Thyroid gland (tissue), 4 donors: ENCODE measurements at regions of chr3 and their contacts with region 1.

Region 1: GRCh38 chr3:160999276-160999675 is 105.9 kb downstream of the B3GALNT1 start:
- DNase-seq: peak; percentile 62
- H3K4me3 ChIP-seq: no peak overlapping the region
- H3K27ac ChIP-seq: peak overlapping the region; percentile 4 to 75 (median 60)
- H3K4me1 ChIP-seq: peaks cover 4 to 14% of the 10 kb centered on the region in 2 donors
- H3K27me3 ChIP-seq: no peaks in the 10 kb centered on the region
- CTCF ChIP-seq: peak in 4 of 6 experiments; percentile 35 to 75 (median 67)
- POLR2A ChIP-seq: no peak

Region 2: DNA sequence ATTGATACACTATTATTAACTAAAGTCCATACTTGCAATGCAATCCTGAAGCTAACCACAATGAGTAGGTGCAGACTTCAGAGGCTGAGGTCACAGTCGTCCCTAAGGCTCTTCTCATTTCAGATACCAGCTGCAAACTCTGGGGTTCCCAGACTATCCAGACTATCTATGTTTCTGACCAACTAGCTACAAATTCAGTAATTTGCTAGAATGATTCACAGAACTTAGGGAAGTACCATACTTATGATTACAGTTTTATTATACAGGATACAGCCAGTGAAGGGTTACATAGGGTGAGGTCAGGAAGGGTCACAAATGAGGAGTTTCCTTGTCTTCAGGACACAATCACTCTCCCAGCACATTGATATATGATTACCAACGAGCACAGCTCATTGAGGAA is 206.7 kb before region 1 on chr3:
- intact Hi-C with region 1: no loop called
- DNase-seq: no peak
- H3K4me3 ChIP-seq: no peak overlapping the region
- H3K27ac ChIP-seq: no peak overlapping the region
- H3K4me1 ChIP-seq: peaks cover 15 to 19% of the 10 kb centered on the region in 2 donors
- H3K27me3 ChIP-seq: no peaks in the 10 kb centered on the region
- CTCF ChIP-seq: no peak
- POLR2A ChIP-seq: no peak

Region 3: GRCh38 chr3:160851629-160852210 is 147.6 kb before region 1 on chr3:
- intact Hi-C with region 1: no loop called
- DNase-seq: no peak
- H3K4me3 ChIP-seq: no peak overlapping the region
- H3K27ac ChIP-seq: no peak overlapping the region
- H3K4me1 ChIP-seq: peaks cover 0 to 16% of the 10 kb centered on the region in 2 donors
- H3K27me3 ChIP-seq: no peaks in the 10 kb centered on the region
- CTCF ChIP-seq: no peak
- POLR2A ChIP-seq: no peak

Region 4: GRCh38 chr3:161104561-161105551 is 105.6 kb after region 1 on chr3 and contains the start of gene B3GALNT1:
- intact Hi-C with region 1: loop called (anchors 10 kb)
- DNase-seq: peak; percentile 69 to 74
- H3K4me3 ChIP-seq: peak within 1 kb of the TSS; percentile 59 to 78 (median 77)
- H3K27ac ChIP-seq: peak within 1 kb of the TSS; percentile 68 to 86 (median 72)
- H3K4me1 ChIP-seq: peaks cover 16 to 32% of the 10 kb centered on the region in 2 donors
- H3K27me3 ChIP-seq: no peaks in the 10 kb centered on the region
- CTCF ChIP-seq: peak in 2 of 6 experiments; percentile 7 to 14
- POLR2A ChIP-seq: peak in 1 of 2 donors; percentile 64
- total RNA-seq, gene B3GALNT1: 22.3 to 42.2 (median 30.2) TPM